Mammary epithelial cell (primary cell): ENCODE measurements at regions of chr2 and their contacts with region 1.

Region 1: DNA sequence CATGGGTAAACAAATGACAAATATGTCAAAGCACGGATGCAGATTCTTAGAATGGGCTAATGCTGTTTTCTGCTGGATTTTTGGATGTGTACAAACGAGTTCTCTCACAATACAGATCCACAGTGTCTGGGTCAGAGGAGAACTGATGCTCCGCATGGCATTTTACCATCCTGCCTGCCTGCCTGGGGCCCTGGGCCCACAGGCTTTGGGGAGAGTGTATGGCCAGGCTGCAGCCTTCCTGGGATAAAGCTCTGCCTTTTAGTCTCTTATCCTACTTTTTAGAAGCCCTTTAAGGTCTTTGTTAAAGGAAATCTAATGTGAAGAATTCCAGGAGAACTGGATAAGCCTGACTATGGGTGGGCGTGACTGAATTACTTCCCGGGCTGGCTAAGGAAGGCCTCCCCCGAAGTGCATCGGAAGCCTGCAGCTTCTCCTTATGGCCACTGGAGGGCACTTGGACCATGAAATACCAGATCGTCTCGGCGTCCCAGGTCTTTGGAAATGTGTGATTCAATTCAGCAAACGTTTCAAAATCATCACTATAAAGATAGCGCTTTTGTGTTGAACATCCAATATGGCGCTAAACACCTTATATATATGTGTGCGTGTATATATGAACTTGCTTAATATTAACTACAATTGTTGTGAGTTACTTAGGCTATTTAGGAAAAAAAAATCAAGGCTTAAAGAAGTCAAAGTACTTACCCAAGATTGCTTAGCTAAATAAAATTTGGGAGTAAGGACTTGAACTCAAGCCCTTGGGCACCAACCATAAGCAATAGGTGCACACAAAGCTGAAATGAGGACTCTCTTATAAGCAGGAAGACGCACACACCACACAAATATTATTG is 15.2 kb upstream of the DNPEP start:
- DNase-seq: peak; percentile 58
- H3K4me3 ChIP-seq: no peak overlapping the region
- H3K27ac ChIP-seq: no peak overlapping the region
- H3K4me1 ChIP-seq: no peaks in the 10 kb centered on the region
- H3K27me3 ChIP-seq: no peaks in the 10 kb centered on the region
- CTCF ChIP-seq: peak; percentile 93 to 99

Region 2: GRCh38 chr2:219352448-219353023 is 50.4 kb before region 1 on chr2:
- CTCF ChIA-PET with region 1: no interaction called
- dilution Hi-C with region 1: no loop called
- in situ Hi-C with region 1: no loop called
- intact Hi-C with region 1: no loop called
- DNase-seq: peak; percentile 51
- H3K4me3 ChIP-seq: no peak overlapping the region
- H3K27ac ChIP-seq: no peak overlapping the region
- H3K4me1 ChIP-seq: no peaks in the 10 kb centered on the region
- H3K27me3 ChIP-seq: no peaks in the 10 kb centered on the region
- CTCF ChIP-seq: peak; percentile 73 to 75

Region 3: GRCh38 chr2:219362524-219363164 is 40.2 kb before region 1 on chr2:
- CTCF ChIA-PET with region 1: interaction called, 12 read pairs
- dilution Hi-C with region 1: no loop called
- in situ Hi-C with region 1: no loop called
- intact Hi-C with region 1: no loop called
- DNase-seq: peak; percentile 75
- H3K4me3 ChIP-seq: no peak overlapping the region
- H3K27ac ChIP-seq: no peak overlapping the region
- H3K4me1 ChIP-seq: peaks cover 15% of the 10 kb centered on the region
- H3K27me3 ChIP-seq: peaks cover 19% of the 10 kb centered on the region
- CTCF ChIP-seq: no peak

Region 4: GRCh38 chr2:219386532-219387280 is 16.2 kb before region 1 on chr2:
- CTCF ChIA-PET with region 1: no interaction called
- dilution Hi-C with region 1: no loop called
- in situ Hi-C with region 1: no loop called
- intact Hi-C with region 1: no loop called
- DNase-seq: no peak
- H3K4me3 ChIP-seq: peak overlapping the region; percentile 80 to 93 (median 81)
- H3K27ac ChIP-seq: peak overlapping the region; percentile 81
- H3K4me1 ChIP-seq: peaks cover 15% of the 10 kb centered on the region
- H3K27me3 ChIP-seq: no peaks in the 10 kb centered on the region
- CTCF ChIP-seq: no peak

Region 5: DNA sequence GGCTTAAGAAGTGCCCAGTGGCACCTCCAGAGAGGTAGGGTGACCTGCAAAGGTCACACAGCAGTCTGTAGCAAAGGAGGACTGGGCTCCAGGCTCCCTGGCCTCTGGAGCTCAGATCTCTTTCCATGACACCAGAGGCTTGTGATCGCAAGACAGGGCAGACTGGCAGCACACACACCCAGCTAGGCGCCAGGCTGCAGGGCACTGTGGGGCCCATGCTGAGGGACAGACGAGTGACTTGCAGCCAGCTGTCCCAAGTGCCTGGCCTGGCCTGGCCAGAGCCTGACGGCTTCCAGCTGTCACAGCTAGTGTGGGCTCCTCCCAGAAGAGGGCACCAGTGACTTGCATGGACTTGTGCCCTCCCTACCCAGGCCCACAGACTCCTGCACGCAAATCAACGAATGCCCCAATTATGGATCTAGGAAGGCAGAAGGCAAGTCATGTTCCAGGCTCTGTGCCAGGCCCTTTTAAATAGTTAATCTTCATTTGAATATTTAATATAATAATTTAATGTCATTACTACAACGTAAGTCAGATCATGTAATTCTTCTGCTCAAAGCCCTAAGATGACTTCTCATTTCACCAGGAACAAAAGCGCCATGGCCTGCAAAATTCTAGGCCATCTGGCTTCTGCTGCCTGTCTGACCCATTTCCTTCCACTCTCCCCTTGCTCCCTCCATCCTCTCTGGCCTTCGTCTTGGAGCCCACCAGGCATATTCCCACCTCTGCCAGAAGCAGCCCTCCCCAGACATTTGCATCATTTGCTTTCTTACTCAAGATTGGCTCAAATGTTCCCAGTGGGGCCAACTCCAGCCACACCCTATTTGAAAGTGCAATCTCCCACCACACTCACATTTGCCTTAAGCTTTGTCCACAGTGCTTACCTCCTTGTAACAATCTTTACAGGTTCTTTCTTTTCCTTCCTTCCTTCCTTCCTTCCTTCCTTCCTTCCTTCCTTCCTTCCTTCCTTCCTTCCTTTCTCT is 28.0 kb after region 1 on chr2:
- CTCF ChIA-PET with region 1: no interaction called
- dilution Hi-C with region 1: no loop called
- in situ Hi-C with region 1: no loop called
- intact Hi-C with region 1: loop called (anchors 1 kb)
- DNase-seq: peak; percentile 41
- H3K4me3 ChIP-seq: no peak overlapping the region
- H3K27ac ChIP-seq: no peak overlapping the region
- H3K4me1 ChIP-seq: peaks cover 6% of the 10 kb centered on the region
- H3K27me3 ChIP-seq: no peaks in the 10 kb centered on the region
- CTCF ChIP-seq: peak; percentile 24 to 64

Region 6: DNA sequence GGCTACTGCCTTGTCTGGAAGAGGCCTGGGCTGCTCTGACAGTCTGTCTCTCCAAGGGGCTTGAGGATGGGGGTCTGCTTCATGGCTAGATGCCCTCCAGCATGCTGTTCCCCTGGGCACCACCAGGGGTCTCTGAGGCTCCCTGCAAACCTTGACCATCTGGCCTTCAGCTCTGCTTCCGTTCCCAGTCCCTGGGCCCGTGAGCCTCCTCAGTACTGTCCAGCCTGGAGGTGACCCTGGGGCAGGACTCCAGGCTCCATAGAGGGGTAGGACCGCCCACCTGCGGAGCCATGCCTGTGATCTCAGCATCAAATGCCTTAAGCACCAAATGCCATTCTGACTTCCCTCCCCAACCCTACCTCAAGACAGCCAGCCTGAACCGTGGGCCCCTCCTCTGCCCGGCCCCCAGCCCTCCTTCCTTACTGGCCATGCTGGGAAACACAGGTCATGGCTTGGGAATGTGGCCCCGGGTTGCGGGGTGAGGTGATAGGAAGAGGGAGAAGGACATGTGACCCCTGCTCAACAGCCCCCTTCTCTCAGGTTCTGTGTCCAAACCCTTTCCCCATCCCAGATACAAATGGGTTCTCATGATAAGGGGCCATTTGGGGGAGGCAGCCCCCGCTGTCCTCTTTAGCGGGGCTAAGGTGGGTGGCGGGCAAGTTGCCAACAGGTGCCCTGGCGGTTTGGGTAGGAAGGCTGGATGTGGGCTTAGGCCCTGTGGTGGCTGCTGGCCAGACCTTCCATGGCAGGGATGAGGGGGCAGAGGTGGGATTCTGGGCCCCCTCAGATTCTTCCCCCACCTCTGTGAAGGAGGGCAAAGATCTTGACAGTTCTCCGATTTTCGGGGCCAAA is 56.8 kb after region 1 on chr2:
- CTCF ChIA-PET with region 1: interaction called, 4 read pairs
- dilution Hi-C with region 1: no loop called
- in situ Hi-C with region 1: no loop called
- intact Hi-C with region 1: loop called (anchors 1 kb)
- DNase-seq: peak; percentile 30
- H3K4me3 ChIP-seq: no peak overlapping the region
- H3K27ac ChIP-seq: no peak overlapping the region
- H3K4me1 ChIP-seq: peaks cover 49% of the 10 kb centered on the region
- H3K27me3 ChIP-seq: no peaks in the 10 kb centered on the region
- CTCF ChIP-seq: peak; percentile 93 to 97

Region 7: DNA sequence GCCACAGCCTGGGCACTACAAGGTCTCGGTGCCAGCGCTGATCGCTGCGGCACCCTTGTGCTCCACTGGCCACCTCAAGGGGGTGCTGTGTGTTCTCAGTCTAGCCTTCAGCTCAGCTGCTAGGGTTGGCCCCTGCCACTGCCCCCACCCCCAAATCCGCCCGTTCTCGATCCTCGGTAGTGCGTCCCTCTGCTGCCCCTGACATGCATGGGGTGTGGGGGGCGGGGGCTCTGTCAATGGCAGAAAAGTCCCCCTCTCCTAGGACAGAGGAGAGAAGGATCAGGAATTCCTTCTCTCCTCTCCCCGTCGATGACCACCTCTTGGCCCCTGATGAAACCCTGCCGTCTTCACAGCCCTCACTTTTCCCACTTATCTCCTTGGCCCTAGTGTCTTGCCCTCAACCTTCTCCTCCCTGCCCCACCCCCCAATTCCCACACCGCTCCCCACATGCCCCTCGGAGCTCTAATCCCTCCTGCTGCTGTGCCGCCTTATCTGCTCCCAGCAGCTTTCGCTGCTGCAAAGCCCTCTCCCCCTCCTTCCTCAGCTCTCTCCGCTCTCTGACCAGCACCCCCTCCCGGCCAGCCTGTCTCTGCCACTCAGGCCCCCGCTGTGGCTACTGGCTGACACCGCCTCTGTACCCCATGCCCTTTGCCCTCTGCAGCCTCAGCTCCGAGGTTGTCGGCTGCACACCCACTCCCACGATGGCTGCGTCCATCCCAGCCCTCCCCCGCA is 107.1 kb after region 1 on chr2:
- CTCF ChIA-PET with region 1: no interaction called
- dilution Hi-C with region 1: loop called (anchors 10 kb)
- in situ Hi-C with region 1: no loop called
- intact Hi-C with region 1: no loop called
- DNase-seq: no peak
- H3K4me3 ChIP-seq: no peak overlapping the region
- H3K27ac ChIP-seq: no peak overlapping the region
- H3K4me1 ChIP-seq: no peaks in the 10 kb centered on the region
- H3K27me3 ChIP-seq: peaks cover 5% of the 10 kb centered on the region
- CTCF ChIP-seq: peak; percentile 73 to 81

Region 8: DNA sequence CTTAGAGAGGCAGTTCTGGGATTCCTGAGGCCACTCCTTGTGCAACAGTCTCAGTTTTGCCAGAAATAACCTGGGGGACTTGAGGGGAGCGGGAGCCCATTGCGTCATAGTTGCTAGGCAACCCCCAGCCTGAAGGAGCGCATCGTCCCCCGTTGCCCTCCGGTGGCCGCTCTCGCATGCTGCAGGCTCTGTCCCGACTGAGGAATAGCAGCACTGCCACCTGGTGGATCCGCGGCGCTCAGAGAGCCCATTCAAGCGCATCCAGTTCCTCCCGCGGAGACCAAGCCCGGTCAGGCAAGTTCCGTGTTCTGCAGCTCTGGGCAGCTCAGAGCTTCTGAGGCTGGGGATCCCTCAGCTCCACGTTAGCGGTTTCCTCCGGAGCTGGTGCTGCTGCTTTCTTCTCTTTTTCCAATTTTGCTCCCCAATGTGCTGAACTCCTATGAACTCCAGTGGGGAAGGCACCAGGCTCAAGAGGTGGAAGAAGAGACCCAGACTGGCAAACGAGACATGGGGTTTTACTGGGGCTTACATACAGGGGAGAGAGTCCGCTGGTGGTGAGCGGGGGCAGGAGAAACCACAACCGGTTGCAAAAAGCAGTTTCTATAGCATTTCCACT is 239.7 kb after region 1 on chr2:
- CTCF ChIA-PET with region 1: no interaction called
- dilution Hi-C with region 1: no loop called
- in situ Hi-C with region 1: no loop called
- intact Hi-C with region 1: loop called (anchors 1 kb)
- DNase-seq: peak; percentile 87
- H3K4me3 ChIP-seq: no peak overlapping the region
- H3K27ac ChIP-seq: no peak overlapping the region
- H3K4me1 ChIP-seq: peaks cover 20% of the 10 kb centered on the region
- H3K27me3 ChIP-seq: no peaks in the 10 kb centered on the region
- CTCF ChIP-seq: peak; percentile 100

Region 9: DNA sequence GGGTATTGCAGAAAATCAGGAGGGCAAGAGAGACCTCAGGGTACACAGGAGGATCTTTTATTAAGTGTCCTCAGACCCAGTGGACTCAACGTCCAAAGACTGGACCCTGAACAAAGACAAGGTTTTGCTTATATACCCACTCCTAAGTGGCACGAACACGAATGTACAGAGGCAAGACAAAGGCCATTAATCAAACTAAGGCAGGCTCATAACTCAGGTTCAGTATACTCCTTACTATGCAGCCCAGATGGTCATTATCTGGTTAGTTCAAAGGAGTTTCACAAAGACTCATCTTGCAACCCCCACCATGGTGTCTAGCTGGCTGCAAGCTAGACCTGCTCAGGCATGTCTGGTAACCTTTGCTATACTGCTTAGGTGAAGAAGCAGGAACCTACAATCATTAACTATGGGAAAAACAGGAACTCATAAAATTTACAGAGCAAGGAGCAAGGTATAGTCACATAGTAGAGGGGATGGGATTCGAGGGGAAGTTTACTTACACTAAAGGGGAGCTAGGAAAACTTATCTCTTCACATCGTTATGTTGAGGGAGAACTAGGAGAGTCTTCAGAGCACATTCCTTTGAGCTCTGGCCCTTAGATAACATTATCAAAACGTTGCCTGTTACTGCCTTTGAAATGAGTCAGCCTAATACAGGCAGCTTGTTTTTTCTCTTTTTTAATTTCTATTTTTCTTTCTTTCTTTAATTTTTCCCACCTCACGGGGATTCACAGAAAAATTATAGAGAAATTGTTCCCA is 258.5 kb after region 1 on chr2:
- CTCF ChIA-PET with region 1: no interaction called
- dilution Hi-C with region 1: no loop called
- in situ Hi-C with region 1: loop called in 1 of 2 experiments (anchors 25 kb)
- intact Hi-C with region 1: no loop called
- DNase-seq: peak; percentile 89
- H3K4me3 ChIP-seq: peak overlapping the region in 1 of 3 experiments; percentile 5
- H3K27ac ChIP-seq: peak overlapping the region; percentile 83
- H3K4me1 ChIP-seq: peaks cover 56% of the 10 kb centered on the region
- H3K27me3 ChIP-seq: no peaks in the 10 kb centered on the region
- CTCF ChIP-seq: no peak